Endothelial cell of umbilical vein (primary cell): ENCODE measurements at regions of chr18 and their contacts with region 1.

Region 1: DNA sequence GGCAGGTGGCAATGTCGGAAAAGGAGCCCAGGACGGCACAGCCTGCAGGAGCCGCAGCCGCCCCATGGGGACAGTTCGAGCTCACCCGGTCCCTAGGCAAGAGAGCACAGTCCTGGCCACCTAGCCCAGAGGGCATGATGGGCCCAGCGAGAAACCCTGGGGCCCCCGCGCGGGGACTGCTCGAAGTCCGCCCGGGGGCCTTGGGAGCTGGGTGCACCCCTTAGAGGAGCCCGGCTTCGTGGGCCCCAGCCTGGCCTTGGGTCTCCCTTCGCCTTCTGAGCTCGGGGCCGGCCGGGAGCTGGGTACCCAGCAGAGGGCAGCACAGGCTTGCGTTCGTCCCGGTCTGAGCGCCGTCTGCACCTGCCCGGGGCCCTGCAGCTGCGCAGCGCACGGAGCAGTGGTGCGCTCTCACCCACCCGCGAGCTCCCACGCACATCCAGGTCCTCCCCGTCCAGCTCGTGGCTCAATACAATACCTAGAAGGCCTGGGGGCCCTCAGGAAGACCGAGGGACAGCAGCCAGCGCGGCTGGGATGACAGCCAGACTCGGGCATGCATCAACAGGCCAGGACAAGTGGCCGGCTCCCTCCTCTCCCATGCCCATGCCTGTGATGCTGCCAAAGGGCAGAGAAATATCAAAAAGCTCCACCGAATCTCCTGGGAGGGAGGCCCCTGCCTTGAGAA is 96.2 kb upstream of the ZNF532 start:
- DNase-seq: peak; percentile 58
- H3K4me3 ChIP-seq: no peak overlapping the region
- H3K27ac ChIP-seq: no peak overlapping the region
- H3K4me1 ChIP-seq: peaks cover 2% of the 10 kb centered on the region
- H3K27me3 ChIP-seq: peaks cover 7 to 25% of the 10 kb centered on the region in 2 experiments
- CTCF ChIP-seq: peak; percentile 86 to 99
- POLR2A ChIP-seq: no peak

Region 2: DNA sequence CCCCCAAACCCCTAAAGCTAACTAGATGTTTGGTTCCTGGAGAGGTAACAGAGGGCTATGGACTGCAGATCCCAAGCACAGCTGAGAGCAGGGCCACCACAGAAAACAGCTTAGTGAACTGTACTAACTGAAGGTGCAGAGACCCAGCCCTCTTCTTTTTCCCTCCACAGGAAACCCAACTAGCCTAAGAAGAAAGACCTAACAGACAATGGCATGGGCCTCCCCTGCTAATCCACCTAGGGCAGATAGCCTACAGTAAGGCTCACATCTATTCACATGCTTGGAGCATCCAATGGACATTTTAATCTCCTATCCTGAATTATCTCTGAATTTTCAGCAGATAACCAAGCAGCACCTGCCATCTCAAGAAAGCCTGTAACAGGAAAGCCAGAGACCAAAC is 1173.1 kb before region 1 on chr18:
- CTCF ChIA-PET with region 1: no interaction called
- POLR2A ChIA-PET with region 1: interaction called, 10 read pairs
- dilution Hi-C with region 1: no loop called
- intact Hi-C with region 1: no loop called
- DNase-seq: no peak
- H3K4me3 ChIP-seq: no peak overlapping the region
- H3K27ac ChIP-seq: no peak overlapping the region
- H3K4me1 ChIP-seq: no peaks in the 10 kb centered on the region
- H3K27me3 ChIP-seq: no peaks in the 10 kb centered on the region
- CTCF ChIP-seq: no peak
- POLR2A ChIP-seq: no peak

Region 3: GRCh38 chr18:58501066-58501896 is 267.2 kb before region 1 on chr18:
- CTCF ChIA-PET with region 1: interaction called, 77 read pairs
- POLR2A ChIA-PET with region 1: no interaction called
- dilution Hi-C with region 1: no loop called
- intact Hi-C with region 1: no loop called
- DNase-seq: no peak
- H3K4me3 ChIP-seq: no peak overlapping the region
- H3K27ac ChIP-seq: no peak overlapping the region
- H3K4me1 ChIP-seq: no peaks in the 10 kb centered on the region
- H3K27me3 ChIP-seq: peaks cover 0 to 2% of the 10 kb centered on the region in 2 experiments
- CTCF ChIP-seq: no peak
- POLR2A ChIP-seq: no peak

Region 4: DNA sequence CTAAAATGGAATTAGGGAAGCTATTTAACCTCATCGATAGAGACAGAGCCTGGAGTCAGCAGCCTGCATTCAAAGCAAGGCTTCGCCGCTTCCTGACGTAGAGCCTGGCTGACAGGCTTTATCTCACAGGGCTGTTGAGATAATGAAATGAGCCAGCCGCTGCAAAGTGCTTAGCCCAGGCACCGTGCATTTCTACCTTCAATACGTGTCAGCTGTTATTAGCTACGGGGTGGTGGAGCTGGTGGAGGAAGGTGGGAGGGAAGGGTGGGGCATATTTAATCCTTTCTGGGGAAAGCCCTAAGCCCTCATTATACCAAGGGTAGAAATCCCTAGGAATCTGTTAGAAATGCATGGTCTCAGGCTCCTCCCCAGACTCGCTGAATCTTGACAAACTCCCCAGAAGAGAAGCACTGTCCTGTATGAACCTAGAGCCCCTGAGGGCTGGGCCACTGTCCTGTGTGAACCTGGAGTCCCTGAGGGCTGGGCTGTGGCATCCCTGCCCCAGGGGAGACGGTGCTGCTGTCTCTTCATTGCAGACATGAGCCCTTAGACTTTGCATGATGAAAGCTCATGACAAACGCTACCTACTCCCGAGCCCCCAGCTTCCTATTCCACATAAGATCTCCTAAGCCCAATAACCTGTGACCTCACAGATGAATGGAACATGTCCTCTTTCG is 212.0 kb before region 1 on chr18:
- CTCF ChIA-PET with region 1: interaction called, 13 read pairs
- POLR2A ChIA-PET with region 1: no interaction called
- dilution Hi-C with region 1: no loop called
- intact Hi-C with region 1: no loop called
- DNase-seq: no peak
- H3K4me3 ChIP-seq: no peak overlapping the region
- H3K27ac ChIP-seq: no peak overlapping the region
- H3K4me1 ChIP-seq: no peaks in the 10 kb centered on the region
- H3K27me3 ChIP-seq: no peaks in the 10 kb centered on the region
- CTCF ChIP-seq: no peak
- POLR2A ChIP-seq: no peak

Region 5: GRCh38 chr18:58732471-58732870 is 36.0 kb before region 1 on chr18:
- CTCF ChIA-PET with region 1: interaction called, 13 read pairs
- POLR2A ChIA-PET with region 1: no interaction called
- dilution Hi-C with region 1: no loop called
- intact Hi-C with region 1: no loop called
- DNase-seq: no peak
- H3K4me3 ChIP-seq: no peak overlapping the region
- H3K27ac ChIP-seq: no peak overlapping the region
- H3K4me1 ChIP-seq: no peaks in the 10 kb centered on the region
- H3K27me3 ChIP-seq: no peaks in the 10 kb centered on the region
- CTCF ChIP-seq: no peak
- POLR2A ChIP-seq: no peak

Region 6: GRCh38 chr18:58796220-58796619 is 27.8 kb after region 1 on chr18:
- CTCF ChIA-PET with region 1: no interaction called
- POLR2A ChIA-PET with region 1: no interaction called
- dilution Hi-C with region 1: no loop called
- intact Hi-C with region 1: no loop called
- DNase-seq: no peak
- H3K4me3 ChIP-seq: no peak overlapping the region
- H3K27ac ChIP-seq: no peak overlapping the region
- H3K4me1 ChIP-seq: no peaks in the 10 kb centered on the region
- H3K27me3 ChIP-seq: no peaks in the 10 kb centered on the region
- CTCF ChIP-seq: no peak
- POLR2A ChIP-seq: no peak

Region 7: DNA sequence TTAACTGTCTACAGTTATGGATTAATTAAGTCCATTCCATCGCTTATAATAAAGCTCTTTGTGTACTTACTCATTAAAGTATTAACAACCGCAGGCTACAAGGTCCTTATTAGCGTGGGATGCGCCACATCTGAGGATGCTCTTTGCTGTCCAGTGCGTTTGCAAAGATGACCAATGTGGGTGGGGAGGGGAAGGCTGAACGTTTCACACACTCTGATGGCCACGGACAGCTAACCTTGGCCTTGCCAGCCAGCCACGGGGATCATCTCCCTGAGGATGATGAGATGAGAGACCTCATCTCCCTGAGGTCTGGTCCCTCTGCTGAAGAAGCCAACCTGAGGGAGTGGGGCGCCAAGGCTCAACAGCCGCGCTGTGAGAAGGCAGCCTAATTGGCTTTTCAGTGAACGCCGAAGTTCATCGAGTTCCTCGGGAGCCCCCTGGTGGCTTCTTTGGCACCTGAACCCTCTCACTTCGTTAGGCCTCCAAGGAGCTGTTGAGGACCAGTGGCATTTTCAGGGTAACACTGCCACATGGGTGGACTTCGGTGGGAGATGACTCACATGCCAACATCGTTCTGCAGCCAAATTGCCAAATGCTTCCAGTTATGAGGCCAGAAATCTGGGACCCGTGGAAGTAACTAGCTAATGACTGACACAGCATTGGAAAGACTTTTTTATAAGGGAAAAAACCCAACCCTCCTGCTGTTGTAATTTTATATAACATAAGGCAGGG is 301.9 kb after region 1 on chr18:
- CTCF ChIA-PET with region 1: interaction called, 994 read pairs
- POLR2A ChIA-PET with region 1: interaction called, 3 read pairs
- dilution Hi-C with region 1: no loop called
- intact Hi-C with region 1: loop called (anchors 1 kb)
- DNase-seq: peak; percentile 78
- H3K4me3 ChIP-seq: no peak overlapping the region
- H3K27ac ChIP-seq: no peak overlapping the region
- H3K4me1 ChIP-seq: no peaks in the 10 kb centered on the region
- H3K27me3 ChIP-seq: peaks cover 2 to 3% of the 10 kb centered on the region in 2 experiments
- CTCF ChIP-seq: peak; percentile 90
- POLR2A ChIP-seq: no peak